Esophagus squamous epithelium (tissue), 5 donors: ENCODE measurements at regions of chr1 and their contacts with region 1.

Region 1: GRCh38 chr1:23184212-23184934 is 15.7 kb upstream of the LUZP1 start:
- DNase-seq: no peak
- H3K4me3 ChIP-seq: peak overlapping the region in 3 of 4 donors; percentile 20 to 58 (median 34)
- H3K27ac ChIP-seq: no peak overlapping the region
- H3K4me1 ChIP-seq: peaks cover 4 to 8% (median 6%) of the 10 kb centered on the region in 3 donors
- H3K27me3 ChIP-seq: no peaks in the 10 kb centered on the region
- CTCF ChIP-seq: peak; percentile 55 to 93 (median 89)
- POLR2A ChIP-seq: no peak

Region 2: DNA sequence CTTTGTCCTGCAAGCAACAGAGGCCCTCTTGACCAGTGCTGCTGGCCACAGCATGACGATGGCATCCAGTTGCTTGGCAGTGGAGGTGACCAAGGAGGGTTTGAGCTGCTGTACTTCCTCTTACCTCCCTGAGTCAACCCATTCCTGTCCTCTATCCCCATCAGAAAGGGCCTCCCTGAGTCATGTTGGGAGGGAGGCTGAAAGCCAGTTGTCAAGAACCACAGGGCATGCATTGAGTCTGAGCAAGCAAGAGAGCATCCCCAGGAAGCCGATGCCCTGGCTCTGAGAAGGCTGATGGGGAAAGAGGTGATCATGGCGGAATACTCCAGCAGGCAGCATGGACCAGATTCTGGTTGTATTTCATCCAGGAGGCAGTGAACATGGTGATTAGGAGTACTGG is 281.3 kb before region 1 on chr1:
- intact Hi-C with region 1: no loop called
- DNase-seq: no peak
- H3K4me3 ChIP-seq: no peak overlapping the region
- H3K27ac ChIP-seq: no peak overlapping the region
- H3K4me1 ChIP-seq: no peaks in the 10 kb centered on the region
- H3K27me3 ChIP-seq: peaks cover 0 to 28% (median 0%) of the 10 kb centered on the region in 4 donors
- CTCF ChIP-seq: no peak
- POLR2A ChIP-seq: no peak

Region 3: DNA sequence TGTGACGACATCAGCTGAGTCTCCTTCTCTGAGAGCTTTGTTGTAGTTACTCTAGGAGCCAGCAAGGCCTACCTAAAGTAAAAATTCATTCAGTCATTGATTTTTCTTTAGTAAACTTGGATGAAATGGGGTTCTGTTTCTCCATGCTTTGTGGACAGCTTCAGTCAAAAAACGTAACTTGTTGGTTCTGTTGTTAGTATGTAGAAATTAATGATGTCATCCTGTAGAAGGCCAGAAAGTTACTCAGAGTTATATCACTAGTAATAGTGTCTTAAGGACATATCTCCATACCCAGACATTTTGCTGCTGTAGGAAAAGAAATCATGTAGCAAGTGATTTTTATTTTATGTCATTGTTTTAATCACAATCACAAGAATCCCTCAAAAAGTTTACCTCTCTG is 122.1 kb before region 1 on chr1:
- intact Hi-C with region 1: no loop called
- DNase-seq: no peak
- H3K4me3 ChIP-seq: no peak overlapping the region
- H3K27ac ChIP-seq: no peak overlapping the region
- H3K4me1 ChIP-seq: no peaks in the 10 kb centered on the region
- H3K27me3 ChIP-seq: no peaks in the 10 kb centered on the region
- CTCF ChIP-seq: no peak
- POLR2A ChIP-seq: no peak

Region 4: GRCh38 chr1:23098463-23099170 is 85.8 kb before region 1 on chr1:
- intact Hi-C with region 1: loop called (anchors 5 kb)
- DNase-seq: no peak
- H3K4me3 ChIP-seq: no peak overlapping the region
- H3K27ac ChIP-seq: no peak overlapping the region
- H3K4me1 ChIP-seq: peaks cover 24 to 71% (median 47%) of the 10 kb centered on the region in 3 donors
- H3K27me3 ChIP-seq: no peaks in the 10 kb centered on the region
- CTCF ChIP-seq: peak; percentile 83 to 96 (median 93)
- POLR2A ChIP-seq: no peak

Region 5: DNA sequence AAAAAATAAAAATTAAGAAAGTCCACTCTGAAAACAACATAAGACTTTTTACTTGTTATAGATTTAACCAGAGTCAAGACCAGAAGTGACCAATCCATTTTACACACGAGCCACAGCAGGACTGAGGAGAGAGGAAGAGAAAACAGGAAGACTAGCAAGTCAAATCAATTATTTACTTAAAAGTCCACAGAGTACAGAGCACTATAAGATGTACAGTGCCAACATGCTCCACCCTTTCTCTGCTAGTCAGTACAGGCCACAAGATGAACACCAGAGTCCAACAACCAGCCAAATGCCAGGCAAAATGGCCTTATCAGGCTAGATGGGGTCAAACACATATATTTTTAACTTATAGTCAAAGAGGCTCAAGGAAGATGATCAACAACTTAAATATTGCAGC is 35.3 kb before region 1 on chr1:
- intact Hi-C with region 1: no loop called
- DNase-seq: no peak
- H3K4me3 ChIP-seq: no peak overlapping the region
- H3K27ac ChIP-seq: peak overlapping the region in 1 of 4 donors; percentile 21
- H3K4me1 ChIP-seq: peaks cover 0 to 32% (median 22%) of the 10 kb centered on the region in 3 donors
- H3K27me3 ChIP-seq: no peaks in the 10 kb centered on the region
- CTCF ChIP-seq: no peak
- POLR2A ChIP-seq: no peak

Region 6: GRCh38 chr1:23979878-23980724 is 795.7 kb after region 1 on chr1 and contains the start of gene SRSF10:
- intact Hi-C with region 1: no loop called
- DNase-seq: peak; percentile 88
- H3K4me3 ChIP-seq: peak within 1 kb of the TSS; percentile 90 to 99 (median 96)
- H3K27ac ChIP-seq: peak within 1 kb of the TSS; percentile 96 to 98 (median 97)
- H3K4me1 ChIP-seq: peaks cover 15 to 62% (median 34%) of the 10 kb centered on the region in 3 donors
- H3K27me3 ChIP-seq: no peaks in the 10 kb centered on the region
- CTCF ChIP-seq: peak in 5 of 6 experiments; percentile 18 to 76 (median 34)
- POLR2A ChIP-seq: peak in 3 of 4 donors; percentile 91 to 99 (median 97)
- total RNA-seq, gene SRSF10: 45.1 to 96.1 (median 67.1) TPM